Aorta (tissue), 5 donors: ENCODE measurements at regions of chr18 and their contacts with region 1.

Region 1: DNA sequence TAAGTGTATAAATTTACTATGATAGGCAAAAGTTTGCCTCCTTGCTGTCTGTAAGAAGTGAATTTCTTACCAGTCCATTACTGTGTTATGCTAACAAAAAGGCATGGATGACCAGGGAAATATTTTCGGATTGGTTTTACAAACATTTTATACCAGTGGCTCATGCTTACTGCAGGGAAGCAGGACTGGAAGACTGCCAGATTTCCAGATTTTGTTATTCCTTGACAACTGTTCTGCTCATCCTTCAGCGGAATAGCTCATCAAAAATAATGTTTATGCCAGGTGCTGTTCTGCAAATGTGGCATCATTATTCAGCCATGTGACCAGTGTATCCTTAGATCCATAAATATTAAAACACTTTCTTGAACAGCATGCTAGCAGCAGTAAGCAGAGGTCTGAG is 40.4 kb upstream of the NETO1 start:
- DNase-seq: no peak
- ATAC-seq: no peak
- H3K4me3 ChIP-seq: no peak overlapping the region
- H3K27ac ChIP-seq: no peak overlapping the region
- H3K4me1 ChIP-seq: no peaks in the 10 kb centered on the region
- H3K27me3 ChIP-seq: no peaks in the 10 kb centered on the region

Region 2: GRCh38 chr18:72826736-72827135 is 81.4 kb before region 1 on chr18:
- intact Hi-C with region 1: loop called in 1 of 2 experiments (anchors 10 kb)
- DNase-seq: no peak
- ATAC-seq: no peak
- H3K4me3 ChIP-seq: no peak overlapping the region
- H3K27ac ChIP-seq: no peak overlapping the region
- H3K4me1 ChIP-seq: no peaks in the 10 kb centered on the region
- H3K27me3 ChIP-seq: no peaks in the 10 kb centered on the region